Activated CD8-positive, alpha-beta T cell treated with anti-CD3 and anti-CD28 coated beads for 36 hours (primary cell): ENCODE measurements at regions of chr1 and their contacts with region 1.

Region 1: GRCh38 chr1:20648946-20649345 is 12.2 kb downstream of the DDOST start:
- DNase-seq: no peak
- ATAC-seq: no peak
- H3K4me3 Mint-ChIP-seq: no peak overlapping the region
- H3K27ac Mint-ChIP-seq: no peak overlapping the region
- H3K4me1 Mint-ChIP-seq: no peaks in the 10 kb centered on the region
- H3K27me3 Mint-ChIP-seq: no peaks in the 10 kb centered on the region
- CTCF ChIP-seq: no peak

Region 2: DNA sequence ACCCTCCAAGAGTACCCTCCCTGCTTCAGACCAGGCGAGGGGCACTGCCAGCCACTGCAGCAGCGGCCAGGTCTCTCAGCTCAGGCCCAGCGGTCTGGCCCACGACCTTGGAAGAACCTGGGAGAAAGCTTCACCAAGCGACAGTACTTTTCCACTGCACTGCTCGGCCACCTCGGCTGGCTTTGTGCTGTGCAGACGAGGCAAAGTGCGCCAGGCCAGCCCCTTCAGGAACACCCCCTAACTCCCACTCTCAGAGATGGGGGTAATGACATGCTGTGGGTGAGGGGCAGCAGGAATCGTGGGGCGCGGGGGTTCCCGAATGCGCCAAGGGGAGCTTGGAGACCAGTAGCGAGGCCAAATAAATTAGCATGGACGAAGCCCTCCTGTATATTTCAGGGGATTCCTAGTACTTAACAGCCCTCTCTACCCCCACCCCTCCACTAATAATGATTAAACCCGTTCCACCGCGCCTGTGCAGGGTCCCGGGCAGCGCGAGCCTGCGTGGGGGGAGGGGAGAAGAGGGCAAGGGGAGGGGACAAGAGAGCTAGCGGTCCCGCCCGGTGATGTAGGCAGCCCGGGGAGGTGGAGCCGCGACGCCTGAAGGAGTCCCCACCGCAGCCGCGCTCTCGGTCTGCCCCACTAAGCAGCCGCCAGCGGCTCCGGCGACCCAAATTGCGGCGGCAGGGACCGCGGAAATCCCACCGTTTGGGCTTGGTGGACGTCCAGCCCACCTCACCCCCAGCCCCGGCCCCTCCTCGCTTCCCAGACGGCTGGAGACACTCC is 96.8 kb before region 1 on chr1 and contains the start of gene FAM43B:
- CTCF ChIA-PET with region 1: no interaction called
- POLR2A ChIA-PET with region 1: no interaction called
- intact Hi-C with region 1: no loop called
- DNase-seq: peak; percentile 36
- ATAC-seq: peak; percentile 51
- H3K4me3 Mint-ChIP-seq: no peak within 1 kb of the TSS
- H3K27ac Mint-ChIP-seq: no peak within 1 kb of the TSS
- H3K4me1 Mint-ChIP-seq: no peaks in the 10 kb centered on the region
- H3K27me3 Mint-ChIP-seq: peaks cover 32% of the 10 kb centered on the region
- CTCF ChIP-seq: no peak
- total RNA-seq, gene FAM43B: not detected

Region 3: DNA sequence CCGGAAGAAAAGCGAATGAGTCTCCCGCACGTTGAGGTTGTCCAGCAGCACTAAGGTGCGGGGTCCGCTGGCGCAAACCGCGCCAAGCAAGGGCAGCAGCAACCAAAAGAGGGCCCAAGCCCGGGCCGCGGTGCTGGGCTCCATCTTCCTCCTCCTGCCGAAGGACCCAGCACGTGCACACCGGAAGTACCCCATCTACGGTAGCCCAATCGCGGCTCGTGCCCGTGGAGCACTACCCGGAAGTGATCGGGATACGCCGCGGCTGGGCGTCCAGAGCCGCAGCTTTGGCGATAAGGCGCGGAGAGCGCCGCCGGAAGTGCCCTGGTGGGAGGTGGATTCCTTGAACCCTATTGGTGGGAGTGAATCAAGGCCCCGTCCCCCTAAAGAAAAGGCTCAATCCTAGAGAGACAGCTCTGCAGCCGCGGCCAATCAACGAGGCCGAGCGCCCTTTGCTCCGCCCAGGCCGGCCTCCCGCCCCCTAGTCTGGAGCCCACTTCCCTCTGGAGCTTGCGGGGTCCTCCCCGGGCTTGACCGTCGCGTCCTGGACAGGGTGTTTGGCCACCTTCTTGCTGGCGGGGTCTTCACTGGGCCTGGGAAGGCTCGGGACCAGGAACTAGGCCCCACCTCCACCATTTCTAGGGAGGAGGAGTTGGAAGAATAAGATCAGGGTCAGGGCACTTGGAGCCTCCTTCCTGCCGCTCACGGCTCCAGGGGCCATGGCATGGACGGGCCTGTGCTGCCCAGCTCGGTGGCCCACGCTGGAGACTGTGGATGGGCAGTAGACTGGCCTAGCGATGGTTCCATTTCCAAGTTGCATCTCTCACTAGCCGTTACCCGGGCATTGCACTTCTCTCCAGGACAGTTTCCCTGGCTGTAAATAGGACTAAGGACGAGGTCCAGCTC is 12.5 kb after region 1 on chr1 and contains the start of gene DDOST:
- CTCF ChIA-PET with region 1: interaction called, 4 read pairs
- POLR2A ChIA-PET with region 1: interaction called, 19 read pairs
- intact Hi-C with region 1: no loop called
- DNase-seq: peak; percentile 97
- ATAC-seq: peak; percentile 96
- H3K4me3 Mint-ChIP-seq: peak within 1 kb of the TSS; percentile 85
- H3K27ac Mint-ChIP-seq: peak within 1 kb of the TSS; percentile 99
- H3K4me1 Mint-ChIP-seq: peaks cover 39% of the 10 kb centered on the region
- H3K27me3 Mint-ChIP-seq: no peaks in the 10 kb centered on the region
- CTCF ChIP-seq: no peak
- total RNA-seq, gene DDOST: 140 to 159 TPM